PC-9 (cell line): ENCODE measurements at regions of chr11 and their contacts with region 1.

Region 1: GRCh38 chr11:43589606-43590250 is 90.8 kb upstream of the HSD17B12 start:
- DNase-seq: no peak
- H3K4me3 ChIP-seq: no peak overlapping the region
- H3K27ac ChIP-seq: no peak overlapping the region
- H3K4me1 ChIP-seq: no peaks in the 10 kb centered on the region
- H3K27me3 ChIP-seq: no peaks in the 10 kb centered on the region
- CTCF ChIP-seq: no peak

Region 2: GRCh38 chr11:42412590-42412989 is 1177.1 kb before region 1 on chr11:
- CTCF ChIA-PET with region 1: no interaction called
- POLR2A ChIA-PET with region 1: no interaction called
- intact Hi-C with region 1: no loop called
- DNase-seq: no peak
- H3K4me3 ChIP-seq: no peak overlapping the region
- H3K27ac ChIP-seq: no peak overlapping the region
- H3K4me1 ChIP-seq: no peaks in the 10 kb centered on the region
- H3K27me3 ChIP-seq: no peaks in the 10 kb centered on the region
- CTCF ChIP-seq: no peak

Region 3: DNA sequence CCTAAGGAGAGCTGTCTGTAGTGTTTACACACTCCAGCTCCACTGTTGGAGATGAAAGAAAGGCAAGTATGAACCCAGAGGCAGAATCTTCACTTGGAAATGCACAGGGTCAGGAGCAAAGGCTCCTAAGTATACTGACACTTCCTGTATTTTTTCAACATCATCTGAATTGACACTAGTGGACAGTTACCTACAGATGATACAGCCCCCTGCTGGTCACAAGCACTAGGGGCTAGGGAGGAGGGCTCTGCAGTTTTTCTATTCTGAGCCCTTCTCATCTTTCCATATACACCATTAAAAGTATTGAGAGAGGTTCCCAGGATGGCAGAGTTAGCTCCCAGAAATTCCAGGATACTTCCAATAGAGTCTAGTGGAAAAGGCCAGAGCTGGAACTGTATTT is 568.3 kb before region 1 on chr11:
- CTCF ChIA-PET with region 1: no interaction called
- POLR2A ChIA-PET with region 1: no interaction called
- intact Hi-C with region 1: no loop called
- DNase-seq: no peak
- H3K4me3 ChIP-seq: no peak overlapping the region
- H3K27ac ChIP-seq: no peak overlapping the region
- H3K4me1 ChIP-seq: no peaks in the 10 kb centered on the region
- H3K27me3 ChIP-seq: no peaks in the 10 kb centered on the region
- CTCF ChIP-seq: peak; percentile 37

Region 4: GRCh38 chr11:43632171-43632570 is 42.4 kb after region 1 on chr11:
- CTCF ChIA-PET with region 1: no interaction called
- POLR2A ChIA-PET with region 1: interaction called, 11 read pairs
- intact Hi-C with region 1: no loop called
- DNase-seq: no peak
- H3K4me3 ChIP-seq: no peak overlapping the region
- H3K27ac ChIP-seq: no peak overlapping the region
- H3K4me1 ChIP-seq: no peaks in the 10 kb centered on the region
- H3K27me3 ChIP-seq: 0 out of 2 replicates have a peak, but pooled peaks cover 3% of the 10 kb centered on the region
- CTCF ChIP-seq: no peak